A673 (cell line): ENCODE measurements at regions of chr2 and their contacts with region 1.

Region 1: DNA sequence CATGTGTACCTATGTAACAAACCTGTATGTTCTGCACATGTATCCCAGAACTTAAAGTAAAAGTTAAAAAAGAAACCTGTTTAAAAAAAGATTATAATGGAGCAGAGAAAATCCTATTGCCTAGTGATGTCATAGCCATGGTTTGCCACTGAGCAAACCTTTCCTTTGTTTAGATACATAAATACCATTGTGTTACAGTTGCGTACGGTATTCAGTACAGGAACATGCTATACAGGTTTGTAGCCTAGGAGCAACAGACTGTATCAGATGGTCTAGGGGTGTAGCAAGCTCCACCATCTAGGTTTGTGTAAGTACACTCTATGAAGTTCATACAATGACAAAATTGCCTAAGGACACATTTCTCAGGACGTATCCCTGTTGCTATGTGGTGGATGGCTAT is 13.0 kb downstream of the ICA1L start:
- DNase-seq: no peak
- H3K4me3 ChIP-seq: no peak overlapping the region
- H3K27ac ChIP-seq: no peak overlapping the region
- H3K4me1 ChIP-seq: no peaks in the 10 kb centered on the region
- H3K27me3 ChIP-seq: no peaks in the 10 kb centered on the region
- CTCF ChIP-seq: no peak

Region 2: GRCh38 chr2:202564226-202564625 is 294.3 kb before region 1 on chr2:
- CTCF ChIA-PET with region 1: no interaction called
- POLR2A ChIA-PET with region 1: no interaction called
- intact Hi-C with region 1: no loop called
- DNase-seq: peak; percentile 37
- H3K4me3 ChIP-seq: no peak overlapping the region
- H3K27ac ChIP-seq: no peak overlapping the region
- H3K4me1 ChIP-seq: peaks cover 19% of the 10 kb centered on the region
- H3K27me3 ChIP-seq: no peaks in the 10 kb centered on the region
- CTCF ChIP-seq: no peak

Region 3: DNA sequence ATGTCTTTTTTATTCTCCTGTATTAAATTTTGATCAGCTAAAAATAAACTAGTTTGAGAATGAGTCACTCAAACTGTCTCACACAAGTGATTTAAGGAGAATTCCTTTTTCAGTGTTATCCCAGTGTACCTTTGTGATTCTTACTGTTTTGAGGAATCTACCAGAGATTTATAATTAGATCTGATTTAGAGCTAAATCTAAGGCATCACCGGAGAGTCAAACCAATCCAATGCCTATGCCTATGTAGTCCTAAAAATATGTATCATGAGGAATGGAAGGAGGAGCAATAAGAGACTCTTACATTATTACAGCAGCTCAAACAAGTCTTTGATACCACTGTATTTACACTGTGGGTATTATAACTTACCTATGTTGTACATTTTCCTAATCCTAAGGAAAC is 316.8 kb after region 1 on chr2:
- CTCF ChIA-PET with region 1: interaction called, 17 read pairs
- POLR2A ChIA-PET with region 1: no interaction called
- intact Hi-C with region 1: no loop called
- DNase-seq: no peak
- H3K4me3 ChIP-seq: no peak overlapping the region
- H3K27ac ChIP-seq: no peak overlapping the region
- H3K4me1 ChIP-seq: peaks cover 3% of the 10 kb centered on the region
- H3K27me3 ChIP-seq: no peaks in the 10 kb centered on the region
- CTCF ChIP-seq: no peak